ENCODE measurements at regions of chr16 and their contacts with region 1.

Region 1: DNA sequence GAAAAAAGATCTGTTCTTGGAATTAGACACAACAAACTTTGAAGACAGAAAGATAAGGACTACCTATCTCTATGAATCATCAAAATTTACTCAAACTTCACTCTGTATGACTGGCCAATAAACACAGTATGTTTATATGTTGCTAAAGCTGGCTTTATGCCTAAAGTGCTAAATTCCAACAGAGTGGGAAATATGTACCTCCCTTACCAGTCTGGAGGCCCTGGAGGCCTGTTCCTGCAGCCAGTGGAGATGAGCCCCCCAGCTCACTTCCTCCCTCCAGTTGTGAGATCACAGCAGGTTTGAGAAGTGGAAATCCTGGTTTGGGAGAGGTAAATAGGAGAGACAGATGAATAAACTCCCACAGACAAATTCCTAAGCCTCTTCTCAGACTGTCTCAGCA is 9.0 kb downstream of the ZNF23 start:
- DNase-seq: no peak
- H3K4me3 ChIP-seq: no peak overlapping the region
- H3K27ac ChIP-seq: no peak overlapping the region
- H3K4me1 ChIP-seq: no peaks in the 10 kb centered on the region
- H3K27me3 ChIP-seq: no peaks in the 10 kb centered on the region
- CTCF ChIP-seq: no peak
- POLR2A ChIP-seq: no peak

Region 2: DNA sequence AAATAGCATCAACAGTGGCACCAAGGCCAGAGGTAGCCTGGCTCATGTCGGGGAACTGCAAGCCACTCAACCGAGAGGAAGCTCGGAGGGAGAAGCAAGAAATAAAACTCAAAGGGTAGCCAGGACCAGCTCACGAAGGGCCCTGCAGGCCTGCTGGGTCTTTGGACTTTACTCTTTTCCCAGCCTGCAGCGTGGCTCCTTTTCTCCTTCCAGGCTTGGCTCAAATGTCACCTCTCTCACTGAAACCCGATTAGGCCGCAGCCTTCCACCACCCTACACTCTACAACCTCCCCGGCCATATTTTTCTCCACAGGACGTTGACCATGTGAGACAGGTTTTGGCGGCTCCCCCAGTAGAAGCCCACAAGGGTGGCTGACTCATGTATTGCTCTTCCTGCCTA is 56.4 kb before region 1 on chr16:
- intact Hi-C with region 1: no loop called
- DNase-seq: no peak
- H3K4me3 ChIP-seq: no peak overlapping the region
- H3K27ac ChIP-seq: no peak overlapping the region
- H3K4me1 ChIP-seq: no peaks in the 10 kb centered on the region
- H3K27me3 ChIP-seq: no peaks in the 10 kb centered on the region
- CTCF ChIP-seq: no peak
- POLR2A ChIP-seq: no peak

Region 3: DNA sequence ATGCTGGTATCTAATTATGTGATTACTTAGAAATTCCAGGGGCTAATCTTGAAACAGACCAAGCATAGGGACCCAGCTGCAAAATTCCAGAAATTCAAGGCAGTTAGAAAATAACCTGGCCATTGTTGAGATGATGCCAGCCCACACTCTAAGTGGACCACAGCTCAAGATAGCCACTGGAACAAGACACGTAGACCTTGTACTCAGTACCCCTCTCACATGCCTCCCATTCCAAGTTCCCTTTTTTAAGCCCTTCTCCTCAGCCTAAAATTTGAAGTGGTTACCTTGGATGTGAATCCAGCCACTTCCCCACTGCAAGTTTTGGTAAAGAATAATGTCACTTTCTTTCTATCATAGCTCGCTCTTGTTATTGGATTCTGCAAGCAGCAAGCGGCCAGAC is 40.2 kb after region 1 on chr16:
- intact Hi-C with region 1: loop called (anchors 5 kb)
- DNase-seq: no peak
- H3K4me3 ChIP-seq: no peak overlapping the region
- H3K27ac ChIP-seq: no peak overlapping the region
- H3K4me1 ChIP-seq: no peaks in the 10 kb centered on the region
- H3K27me3 ChIP-seq: no peaks in the 10 kb centered on the region
- CTCF ChIP-seq: no peak
- POLR2A ChIP-seq: no peak